ENCODE measurements at regions of chr21 and their contacts with region 1.

Region 1: DNA sequence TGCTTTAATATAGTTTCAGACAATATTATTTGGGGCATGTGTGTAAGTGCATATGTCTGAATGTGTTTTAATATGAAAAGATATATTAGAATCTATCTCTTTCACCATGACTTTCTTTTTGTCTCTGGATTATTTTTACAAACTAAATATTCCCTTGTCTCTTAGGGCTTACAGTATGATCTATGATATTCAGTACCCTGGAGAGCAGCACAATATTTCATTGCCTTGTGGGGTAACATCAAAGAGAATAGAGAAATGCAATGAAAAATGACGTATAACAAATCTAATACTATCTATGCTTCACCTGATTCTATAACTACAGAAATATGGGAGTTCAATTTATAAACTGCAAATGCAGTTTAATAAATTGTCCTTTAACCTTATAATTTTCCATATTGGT is 2084.5 kb downstream of the MRPL39 start:
- DNase-seq: no peak
- ATAC-seq: no peak
- H3K4me3 ChIP-seq: no peak overlapping the region
- H3K4me3 Mint-ChIP-seq: no peak overlapping the region
- H3K27ac ChIP-seq: no peak overlapping the region
- H3K27ac Mint-ChIP-seq: no peak overlapping the region
- H3K4me1 ChIP-seq: no peaks in the 10 kb centered on the region
- H3K4me1 Mint-ChIP-seq: no peaks in the 10 kb centered on the region
- H3K27me3 ChIP-seq: no peaks in the 10 kb centered on the region
- H3K27me3 Mint-ChIP-seq: no peaks in the 10 kb centered on the region

Region 2: DNA sequence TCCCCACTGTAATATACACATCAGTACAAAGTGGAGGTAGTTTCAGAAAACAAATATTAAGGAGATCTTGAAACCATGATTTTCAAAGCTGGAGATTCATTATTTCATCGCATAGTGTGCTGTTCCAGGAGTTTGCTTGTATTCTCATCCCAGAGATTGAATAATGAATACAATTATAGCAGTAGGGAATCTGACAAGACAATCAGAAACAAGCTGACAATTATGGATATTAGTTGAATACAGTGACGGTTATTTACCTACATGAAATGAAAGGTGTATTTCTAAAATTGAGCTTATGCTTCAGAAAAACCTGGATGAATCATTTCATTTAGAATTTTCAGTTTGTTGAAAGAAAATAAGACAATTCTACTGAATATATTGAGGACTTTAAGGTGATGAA is 34.5 kb before region 1 on chr21:
- CTCF ChIA-PET with region 1: no interaction called
- POLR2A ChIA-PET with region 1: no interaction called
- intact Hi-C with region 1: no loop called
- DNase-seq: no peak
- ATAC-seq: no peak
- H3K4me3 ChIP-seq: no peak overlapping the region
- H3K4me3 Mint-ChIP-seq: no peak overlapping the region
- H3K27ac ChIP-seq: no peak overlapping the region
- H3K27ac Mint-ChIP-seq: no peak overlapping the region
- H3K4me1 ChIP-seq: no peaks in the 10 kb centered on the region
- H3K4me1 Mint-ChIP-seq: no peaks in the 10 kb centered on the region
- H3K27me3 ChIP-seq: no peaks in the 10 kb centered on the region
- H3K27me3 Mint-ChIP-seq: no peaks in the 10 kb centered on the region

Region 3: GRCh38 chr21:23578027-23578426 is 55.3 kb after region 1 on chr21:
- CTCF ChIA-PET with region 1: no interaction called
- POLR2A ChIA-PET with region 1: no interaction called
- intact Hi-C with region 1: loop called in 1 of 2 experiments (anchors 10 kb)
- DNase-seq: no peak
- ATAC-seq: no peak
- H3K4me3 ChIP-seq: no peak overlapping the region
- H3K4me3 Mint-ChIP-seq: no peak overlapping the region
- H3K27ac ChIP-seq: no peak overlapping the region
- H3K27ac Mint-ChIP-seq: no peak overlapping the region
- H3K4me1 ChIP-seq: no peaks in the 10 kb centered on the region
- H3K4me1 Mint-ChIP-seq: no peaks in the 10 kb centered on the region
- H3K27me3 ChIP-seq: no peaks in the 10 kb centered on the region
- H3K27me3 Mint-ChIP-seq: no peaks in the 10 kb centered on the region